CD8-positive, alpha-beta memory T cell (primary cell): ENCODE measurements at regions of chr7 and their contacts with region 1.

Region 1: DNA sequence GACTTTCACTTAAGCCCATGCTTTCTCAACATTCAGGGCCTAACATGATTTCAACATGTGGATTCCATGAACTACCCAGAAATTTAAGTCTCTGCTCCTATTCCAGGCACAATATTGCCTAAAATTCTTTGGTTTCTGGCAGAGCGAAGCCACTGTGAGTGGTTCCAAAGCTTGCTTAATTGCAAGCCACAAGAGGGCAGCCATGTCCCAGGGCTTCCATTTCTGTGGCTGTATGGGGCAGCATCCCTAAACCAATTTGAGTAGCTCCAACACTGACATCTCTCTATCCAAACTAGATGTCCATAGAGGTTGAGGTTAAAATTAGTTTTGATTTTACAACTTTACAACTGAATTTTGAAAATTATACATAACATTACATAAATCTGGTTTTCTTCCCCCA is 56.3 kb upstream of the MDFIC start:
- DNase-seq: peak; percentile 22 to 72 (median 40)
- H3K4me3 ChIP-seq: no peak overlapping the region
- H3K4me3 Mint-ChIP-seq: no peak overlapping the region
- H3K27ac ChIP-seq: no peak overlapping the region
- H3K27ac Mint-ChIP-seq: no peak overlapping the region
- H3K4me1 ChIP-seq: no peaks in the 10 kb centered on the region
- H3K4me1 Mint-ChIP-seq: peaks cover 0 to 6% (median 4%) of the 10 kb centered on the region in 3 donors
- H3K27me3 ChIP-seq: no peaks in the 10 kb centered on the region
- H3K27me3 Mint-ChIP-seq: peaks cover 0 to 2% of the 10 kb centered on the region in 2 donors

Region 2: DNA sequence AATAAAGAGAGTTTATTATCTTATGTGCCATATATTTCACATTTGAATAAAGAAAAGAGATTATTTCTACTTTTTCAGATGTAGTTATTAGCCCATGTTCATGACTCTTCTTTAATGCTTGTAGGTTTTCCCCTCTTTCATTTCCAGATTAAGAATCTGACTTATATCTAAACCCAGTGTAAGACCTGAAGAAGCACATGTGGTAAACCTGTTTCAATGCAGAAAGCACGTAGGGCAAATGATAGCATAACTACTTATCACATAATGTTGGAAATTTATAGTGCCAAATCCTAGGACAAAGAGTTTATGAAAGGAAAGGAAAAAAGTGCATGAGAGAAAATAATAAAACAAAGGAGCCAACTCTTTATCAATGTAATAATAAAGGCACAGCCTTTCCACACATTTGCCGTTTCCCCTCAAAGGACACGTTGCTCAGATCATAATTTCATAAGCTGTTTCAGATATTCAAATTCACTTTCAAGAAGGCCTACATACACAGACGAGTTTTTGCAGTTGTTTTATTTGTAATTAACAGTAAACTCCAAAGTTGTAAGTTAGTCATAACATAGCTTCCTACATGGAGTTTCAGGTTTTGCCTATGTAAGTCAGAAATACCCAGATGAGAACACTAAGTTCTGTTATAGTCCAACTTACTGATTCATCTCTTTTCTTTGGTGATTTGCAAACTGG is 32.5 kb before region 1 on chr7:
- CTCF ChIA-PET with region 1: no interaction called
- POLR2A ChIA-PET with region 1: no interaction called
- DNase-seq: no peak
- H3K4me3 ChIP-seq: no peak overlapping the region
- H3K4me3 Mint-ChIP-seq: no peak overlapping the region
- H3K27ac ChIP-seq: no peak overlapping the region
- H3K27ac Mint-ChIP-seq: no peak overlapping the region
- H3K4me1 ChIP-seq: no peaks in the 10 kb centered on the region
- H3K4me1 Mint-ChIP-seq: peaks cover 7 to 17% (median 15%) of the 10 kb centered on the region in 3 donors
- H3K27me3 ChIP-seq: no peaks in the 10 kb centered on the region
- H3K27me3 Mint-ChIP-seq: no peaks in the 10 kb centered on the region

Region 3: GRCh38 chr7:114922652-114923402 is 57.3 kb after region 1 on chr7:
- CTCF ChIA-PET with region 1: interaction called, 11 read pairs
- POLR2A ChIA-PET with region 1: no interaction called
- DNase-seq: peak; percentile 30 to 75 (median 61)
- H3K4me3 ChIP-seq: peak overlapping the region; percentile 82
- H3K4me3 Mint-ChIP-seq: peak overlapping the region; percentile 89 to 99 (median 97)
- H3K27ac ChIP-seq: peak overlapping the region; percentile 77
- H3K27ac Mint-ChIP-seq: peak overlapping the region; percentile 91 to 99 (median 96)
- H3K4me1 ChIP-seq: peaks cover 32% of the 10 kb centered on the region
- H3K4me1 Mint-ChIP-seq: peaks cover 47 to 64% (median 60%) of the 10 kb centered on the region in 3 donors
- H3K27me3 ChIP-seq: no peaks in the 10 kb centered on the region
- H3K27me3 Mint-ChIP-seq: no peaks in the 10 kb centered on the region

Region 4: GRCh38 chr7:114939484-114940097 is 74.0 kb after region 1 on chr7:
- CTCF ChIA-PET with region 1: interaction called, 12 read pairs
- POLR2A ChIA-PET with region 1: no interaction called
- DNase-seq: peak in 3 of 5 donors; percentile 14 to 53 (median 24)
- H3K4me3 ChIP-seq: no peak overlapping the region
- H3K4me3 Mint-ChIP-seq: no peak overlapping the region
- H3K27ac ChIP-seq: no peak overlapping the region
- H3K27ac Mint-ChIP-seq: peak overlapping the region in 1 of 8 donors; percentile 58
- H3K4me1 ChIP-seq: peaks cover 45% of the 10 kb centered on the region
- H3K4me1 Mint-ChIP-seq: peaks cover 60 to 95% (median 66%) of the 10 kb centered on the region in 3 donors
- H3K27me3 ChIP-seq: no peaks in the 10 kb centered on the region
- H3K27me3 Mint-ChIP-seq: no peaks in the 10 kb centered on the region

Region 5: DNA sequence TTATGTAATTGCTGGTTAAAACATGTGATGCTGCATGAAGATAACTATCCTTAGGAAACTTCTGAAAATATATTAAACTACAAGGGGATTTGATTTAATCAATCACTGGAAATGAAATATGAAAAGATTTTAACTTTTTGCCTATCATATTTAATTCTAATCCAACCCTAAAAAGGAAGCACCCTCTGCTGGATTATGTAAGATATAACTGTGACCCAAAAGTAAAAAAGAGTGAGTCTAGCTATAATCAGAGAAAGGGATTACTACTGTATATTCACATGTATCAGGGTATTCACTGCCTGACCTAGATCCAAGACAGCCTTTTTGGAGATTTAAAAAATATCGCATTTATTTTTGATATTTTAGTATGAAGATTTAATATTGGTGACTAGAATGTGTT is 351.8 kb after region 1 on chr7:
- CTCF ChIA-PET with region 1: interaction called, 18 read pairs
- POLR2A ChIA-PET with region 1: no interaction called
- DNase-seq: no peak
- H3K4me3 ChIP-seq: no peak overlapping the region
- H3K4me3 Mint-ChIP-seq: no peak overlapping the region
- H3K27ac ChIP-seq: no peak overlapping the region
- H3K27ac Mint-ChIP-seq: no peak overlapping the region
- H3K4me1 ChIP-seq: peaks cover 7% of the 10 kb centered on the region
- H3K4me1 Mint-ChIP-seq: peaks cover 5 to 14% (median 13%) of the 10 kb centered on the region in 3 donors
- H3K27me3 ChIP-seq: no peaks in the 10 kb centered on the region
- H3K27me3 Mint-ChIP-seq: peaks cover 0 to 2% of the 10 kb centered on the region in 2 donors